ENCODE measurements at regions of chr16 and their contacts with region 1.

Region 1: GRCh38 chr16:53130159-53131049 is 75.6 kb downstream of the CHD9 start:
- DNase-seq: peak; percentile 98
- ATAC-seq: peak; percentile 80 to 82
- H3K4me3 ChIP-seq: peak overlapping the region; percentile 69 to 81 (median 76)
- H3K27ac ChIP-seq: peak overlapping the region; percentile 92 to 97 (median 94)
- H3K4me1 ChIP-seq: peaks cover 26 to 29% of the 10 kb centered on the region in 2 donors
- H3K27me3 ChIP-seq: no peaks in the 10 kb centered on the region
- CTCF ChIP-seq: peak in 4 of 5 experiments; percentile 88 to 94 (median 92)
- POLR2A ChIP-seq: peak; percentile 83 to 90

Region 2: GRCh38 chr16:53091466-53092211 is 38.8 kb before region 1 on chr16:
- in situ Hi-C with region 1: no loop called
- intact Hi-C with region 1: loop called (anchors 2 kb)
- DNase-seq: peak; percentile 51 to 61
- ATAC-seq: peak in 1 of 2 donors; percentile 4
- H3K4me3 ChIP-seq: peak overlapping the region in 2 of 4 donors; percentile 9 to 41
- H3K27ac ChIP-seq: peak overlapping the region; percentile 90 to 95 (median 92)
- H3K4me1 ChIP-seq: peaks cover 65 to 68% of the 10 kb centered on the region in 2 donors
- H3K27me3 ChIP-seq: no peaks in the 10 kb centered on the region
- CTCF ChIP-seq: no peak
- POLR2A ChIP-seq: no peak

Region 3: DNA sequence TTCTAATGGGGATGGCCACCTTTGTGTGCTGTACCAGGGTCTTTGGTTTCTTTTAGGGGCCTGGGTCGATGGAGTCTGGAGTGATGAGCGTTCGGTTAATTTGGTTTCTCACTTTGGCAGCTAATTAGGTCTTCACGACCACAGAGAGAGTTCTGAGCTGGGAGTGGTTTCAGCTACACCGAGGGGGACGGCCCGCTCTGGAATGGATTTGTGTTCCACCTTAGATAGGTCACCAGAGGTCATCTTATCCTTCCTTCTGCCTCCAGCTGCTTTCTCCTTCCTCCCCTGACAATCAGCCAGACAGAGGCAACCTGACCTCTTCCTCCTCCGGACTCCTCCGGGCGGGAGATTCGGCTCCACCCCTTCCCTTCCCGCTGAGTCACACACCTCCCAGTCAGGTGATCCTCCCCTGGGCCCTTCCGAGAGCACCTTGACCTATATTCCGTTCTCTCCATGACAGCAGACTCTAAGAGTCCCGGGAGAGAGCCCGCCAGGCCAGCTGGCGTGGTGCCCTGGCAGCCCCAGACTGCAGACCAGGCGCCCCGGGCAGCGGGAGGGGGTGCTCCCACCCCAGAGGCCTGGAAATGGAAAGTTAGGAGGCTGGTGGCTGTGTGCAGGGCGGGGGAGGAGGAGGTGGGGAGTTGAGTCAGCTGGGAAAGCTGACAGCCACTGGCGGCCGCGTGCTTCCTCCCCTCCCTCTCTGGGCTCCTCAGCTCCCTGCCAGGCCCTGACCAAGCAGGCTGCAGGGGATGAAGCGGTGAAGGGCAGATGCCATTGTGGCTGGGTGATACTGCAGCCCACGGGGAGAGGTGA is 30.9 kb before region 1 on chr16:
- in situ Hi-C with region 1: no loop called
- intact Hi-C with region 1: loop called (anchors 1 kb)
- DNase-seq: peak; percentile 94 to 99
- ATAC-seq: peak; percentile 85 to 91
- H3K4me3 ChIP-seq: peak overlapping the region; percentile 51 to 60 (median 54)
- H3K27ac ChIP-seq: peak overlapping the region; percentile 94 to 96 (median 95)
- H3K4me1 ChIP-seq: peaks cover 45% of the 10 kb centered on the region in 2 donors
- H3K27me3 ChIP-seq: no peaks in the 10 kb centered on the region
- CTCF ChIP-seq: no peak
- POLR2A ChIP-seq: peak in 1 of 2 donors; percentile 39

Region 4: DNA sequence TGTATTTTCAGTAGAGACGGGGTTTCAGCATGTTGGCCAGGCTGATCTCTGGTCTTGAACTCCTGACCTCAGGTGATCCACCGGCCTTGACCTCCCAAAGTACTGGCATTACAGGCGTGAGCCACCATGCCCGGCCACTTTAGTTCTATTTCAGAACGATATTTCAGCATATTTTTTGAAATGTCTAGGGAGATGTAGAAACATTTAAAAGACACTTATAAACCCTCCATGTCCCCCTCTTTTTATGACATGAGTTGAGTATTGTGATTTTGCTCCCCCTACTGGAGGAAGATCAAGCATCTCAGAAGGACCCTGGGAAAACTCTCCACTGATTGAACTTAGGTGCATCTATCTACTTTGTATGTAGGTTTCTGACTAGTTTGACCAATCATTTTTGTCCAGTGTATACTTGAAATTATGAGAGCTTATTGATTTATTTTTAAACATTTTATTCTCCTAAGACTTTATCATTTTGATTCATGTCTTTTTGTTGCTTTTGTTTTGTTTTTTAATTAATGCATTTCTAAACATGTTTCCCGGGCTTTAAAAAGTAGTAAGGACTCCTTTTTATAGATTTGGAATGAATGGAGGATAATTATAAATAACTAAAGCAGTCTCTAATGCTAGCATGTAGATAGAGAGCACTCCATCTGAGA is 29.5 kb after region 1 on chr16:
- in situ Hi-C with region 1: no loop called
- intact Hi-C with region 1: loop called (anchors 1 kb)
- DNase-seq: no peak
- ATAC-seq: peak; percentile 62 to 74
- H3K4me3 ChIP-seq: no peak overlapping the region
- H3K27ac ChIP-seq: peak overlapping the region in 1 of 4 donors; percentile 23
- H3K4me1 ChIP-seq: peaks cover 9 to 10% of the 10 kb centered on the region in 2 donors
- H3K27me3 ChIP-seq: no peaks in the 10 kb centered on the region
- CTCF ChIP-seq: peak; percentile 41 to 71 (median 60)
- POLR2A ChIP-seq: no peak

Region 5: GRCh38 chr16:53207810-53208752 is 77.7 kb after region 1 on chr16:
- in situ Hi-C with region 1: no loop called
- intact Hi-C with region 1: loop called (anchors 1 kb)
- DNase-seq: peak; percentile 28 to 45
- ATAC-seq: peak; percentile 86 to 95
- H3K4me3 ChIP-seq: peak overlapping the region; percentile 32 to 56 (median 43)
- H3K27ac ChIP-seq: peak overlapping the region; percentile 70 to 90 (median 76)
- H3K4me1 ChIP-seq: peaks cover 68 to 72% of the 10 kb centered on the region in 2 donors
- H3K27me3 ChIP-seq: no peaks in the 10 kb centered on the region
- CTCF ChIP-seq: peak; percentile 22 to 58 (median 51)
- POLR2A ChIP-seq: no peak

Region 6: GRCh38 chr16:53220585-53220984 is 90.2 kb after region 1 on chr16:
- in situ Hi-C with region 1: no loop called
- intact Hi-C with region 1: loop called (anchors 5 kb)
- DNase-seq: no peak
- ATAC-seq: no peak
- H3K4me3 ChIP-seq: no peak overlapping the region
- H3K27ac ChIP-seq: peak overlapping the region; percentile 9 to 71 (median 60)
- H3K4me1 ChIP-seq: peaks cover 66% of the 10 kb centered on the region in 2 donors
- H3K27me3 ChIP-seq: no peaks in the 10 kb centered on the region
- CTCF ChIP-seq: peak in 2 of 5 experiments; percentile 11 to 38
- POLR2A ChIP-seq: no peak

Region 7: GRCh38 chr16:53435066-53435688 is 304.8 kb after region 1 on chr16:
- in situ Hi-C with region 1: no loop called
- intact Hi-C with region 1: loop called (anchors 5 kb)
- DNase-seq: peak; percentile 85 to 89
- ATAC-seq: peak; percentile 93 to 97
- H3K4me3 ChIP-seq: peak overlapping the region; percentile 94 to 100 (median 98)
- H3K27ac ChIP-seq: peak overlapping the region; percentile 96 to 99 (median 98)
- H3K4me1 ChIP-seq: peaks cover 18 to 20% of the 10 kb centered on the region in 2 donors
- H3K27me3 ChIP-seq: no peaks in the 10 kb centered on the region
- CTCF ChIP-seq: no peak
- POLR2A ChIP-seq: peak; percentile 56 to 85